Posterior cingulate gyrus (tissue), 11 donors: ENCODE measurements at regions of chr3 and their contacts with region 1.

Region 1: DNA sequence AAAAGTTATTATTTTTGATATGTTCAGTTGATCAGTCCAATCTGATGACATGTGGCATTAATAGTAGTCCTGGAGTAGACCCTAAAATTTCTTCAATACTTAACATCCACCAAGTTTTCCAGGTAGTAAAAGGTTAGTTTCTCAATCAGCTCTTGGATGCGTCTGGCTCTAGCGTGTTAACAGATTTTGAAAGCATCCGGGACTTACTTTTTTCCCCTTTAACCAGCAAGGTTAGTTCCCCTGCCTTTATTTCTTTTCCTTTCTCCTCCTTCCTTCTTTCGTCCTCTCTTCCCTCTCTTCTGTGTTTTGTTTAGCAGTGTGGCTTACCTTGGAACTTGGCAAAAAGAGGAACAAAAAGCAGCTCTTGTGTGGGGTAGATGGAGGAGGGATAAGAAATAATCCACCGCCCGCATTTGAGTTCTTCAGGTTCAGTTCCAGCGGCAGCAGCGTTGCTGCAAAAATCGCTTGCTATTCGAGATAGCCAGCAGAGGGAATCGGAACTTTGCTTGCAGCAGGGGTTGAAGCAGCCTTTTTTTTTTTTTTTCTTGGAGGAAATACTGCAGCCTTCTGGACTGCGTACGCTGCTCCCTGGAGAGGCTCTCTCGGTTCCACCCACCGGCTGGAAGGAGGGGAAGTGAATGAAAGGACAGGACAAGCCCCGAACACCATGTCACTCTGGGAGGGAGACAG is at the start of gene RBMS3:
- DNase-seq: peak; percentile 23 to 91 (median 42)

Region 2: GRCh38 chr3:28916713-28917499 is 363.6 kb before region 1 on chr3:
- intact Hi-C with region 1: loop called (anchors 5 kb)
- DNase-seq: peak in 9 of 10 donors; percentile 14 to 83 (median 34)

Region 3: GRCh38 chr3:28951773-28952556 is 328.6 kb before region 1 on chr3:
- intact Hi-C with region 1: no loop called
- DNase-seq: no peak

Region 4: DNA sequence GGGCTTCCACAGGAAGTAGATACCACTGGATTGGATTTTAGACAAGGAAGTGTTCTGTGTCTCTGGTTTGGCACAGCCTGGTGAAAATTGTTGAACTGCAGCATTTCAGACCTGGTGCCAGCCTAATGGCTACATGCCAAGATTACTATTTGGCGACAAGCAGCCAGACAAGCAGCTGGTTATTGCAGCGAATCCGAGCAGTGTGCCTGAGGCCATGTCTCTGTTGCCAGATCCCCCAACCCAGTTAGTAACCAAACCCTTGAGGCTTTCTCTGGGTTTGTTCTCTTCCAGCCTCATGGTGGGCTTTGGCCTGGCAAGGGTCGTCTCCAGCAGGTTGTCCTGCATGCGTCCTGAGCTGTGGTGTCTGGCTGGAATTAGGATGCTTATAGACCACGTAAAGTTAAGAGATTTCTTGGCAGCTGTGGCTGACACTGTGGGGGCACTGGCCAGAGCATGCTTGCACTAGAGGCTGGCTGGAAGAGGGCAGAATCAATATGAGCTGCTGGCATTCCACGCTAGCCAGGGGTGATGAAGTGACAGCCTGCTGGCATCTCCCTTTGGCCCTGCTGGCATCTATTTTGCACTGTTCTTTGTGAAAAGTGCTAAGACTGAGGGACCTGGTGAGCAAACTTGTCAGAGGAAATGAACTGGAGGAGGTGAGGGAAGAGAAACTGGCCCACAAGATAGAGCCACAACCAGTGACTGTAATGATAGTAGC is 172.9 kb after region 1 on chr3:
- intact Hi-C with region 1: no loop called
- DNase-seq: peak in 6 of 10 donors; percentile 7 to 82 (median 36)

Region 5: GRCh38 chr3:29759411-29760225 is 479.1 kb after region 1 on chr3:
- intact Hi-C with region 1: loop called (anchors 10 kb)
- DNase-seq: no peak